Posterior cingulate gyrus (tissue), 11 donors: ENCODE measurements at regions of chr1 and their contacts with region 1.

Region 1: DNA sequence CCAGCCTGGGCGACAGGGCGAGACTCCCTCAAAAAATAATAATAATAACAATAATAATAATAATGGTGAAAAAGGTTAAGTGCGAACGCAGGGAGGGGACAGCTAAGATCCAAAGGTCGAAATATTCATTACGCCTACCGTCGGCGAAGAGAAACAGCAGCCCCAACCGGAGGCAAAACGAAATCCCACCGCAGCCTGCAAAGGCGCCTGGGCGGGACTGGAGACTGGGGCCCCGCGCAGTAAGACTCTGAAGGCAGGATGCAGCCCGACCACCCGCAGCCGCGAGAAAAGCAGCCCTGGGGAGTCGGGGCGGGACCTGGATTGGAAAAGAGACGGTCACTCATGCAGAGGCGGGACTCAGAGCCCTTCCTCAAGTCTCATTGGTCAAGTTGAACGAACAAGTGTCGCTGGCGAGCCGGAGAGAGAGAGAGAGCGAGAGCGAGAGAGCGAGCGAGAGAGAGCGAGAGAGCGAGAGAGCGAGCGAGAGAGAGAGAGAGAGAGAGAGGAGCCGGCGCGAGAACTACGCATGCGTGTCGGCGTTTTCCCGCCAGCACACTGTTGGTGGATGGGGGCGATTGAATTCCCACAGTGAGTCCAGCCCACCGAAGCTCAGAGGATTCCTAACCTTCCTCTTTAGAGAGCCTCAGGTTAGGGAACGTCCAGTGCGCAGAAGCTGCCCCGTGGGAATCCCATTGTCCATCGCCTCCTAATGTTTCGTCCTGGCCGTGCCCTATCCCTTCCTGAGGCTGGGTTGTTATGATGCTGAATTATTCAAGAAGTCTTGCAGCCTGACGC is 10.7 kb downstream of the ENTREP3 start:
- DNase-seq: peak; percentile 93 to 100 (median 98)

Region 2: GRCh38 chr1:155208541-155209311 is 35.8 kb before region 1 on chr1 and contains the start of gene MTX1:
- intact Hi-C with region 1: loop called (anchors 5 kb)
- DNase-seq: peak; percentile 80 to 98 (median 86)

Region 3: DNA sequence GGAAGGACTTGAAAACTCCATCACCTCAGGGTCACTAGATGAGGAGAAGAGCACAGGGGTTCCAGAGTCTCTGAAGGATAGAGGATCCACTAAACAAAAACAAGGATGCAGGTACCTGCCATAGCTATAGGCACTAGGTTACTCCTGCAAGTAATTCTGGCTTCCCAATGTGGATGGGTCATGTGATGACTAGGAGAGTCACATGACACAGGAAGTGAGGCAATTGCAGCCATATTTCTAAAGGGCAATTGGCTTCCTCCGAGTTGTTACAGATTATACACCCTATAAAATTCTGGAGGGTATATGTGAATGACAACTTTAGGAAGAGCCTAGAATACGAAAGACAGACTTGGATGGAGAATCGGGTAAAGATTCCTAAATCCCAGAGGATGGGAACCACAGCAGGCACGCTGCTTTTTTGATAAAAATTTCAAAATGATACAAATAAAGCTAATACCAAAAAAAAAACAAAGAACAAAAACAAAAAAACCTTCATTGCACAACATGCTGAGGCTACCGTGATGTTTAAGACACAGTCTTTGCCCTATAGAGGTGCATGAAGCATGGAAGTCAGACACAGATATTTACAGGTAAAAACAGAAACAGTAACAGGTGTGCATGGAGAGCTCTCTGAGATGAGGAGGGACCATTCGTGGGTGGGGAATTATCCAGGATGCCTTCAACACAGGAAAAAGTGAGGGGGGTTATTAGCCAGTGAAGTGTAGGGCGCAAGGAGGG is 25.5 kb before region 1 on chr1:
- intact Hi-C with region 1: loop called (anchors 1 kb)
- DNase-seq: peak in 5 of 10 donors; percentile 66 to 90 (median 68)

Region 4: GRCh38 chr1:155227261-155228095 is 17.1 kb before region 1 on chr1:
- intact Hi-C with region 1: loop called (anchors 1 kb)
- DNase-seq: peak; percentile 96 to 100 (median 98)